Activated naive CD4-positive, alpha-beta T cell treated with anti-CD3 and anti-CD28 coated beads for 36 hours (primary cell): ENCODE measurements at regions of chr20 and their contacts with region 1.

Region 1: GRCh38 chr20:25696384-25697131 is at the start of gene ZNF337:
- DNase-seq: peak; percentile 96
- H3K4me3 Mint-ChIP-seq: peak within 1 kb of the TSS; percentile 93
- H3K27ac Mint-ChIP-seq: peak within 1 kb of the TSS; percentile 81
- H3K4me1 Mint-ChIP-seq: peaks cover 26% of the 10 kb centered on the region
- H3K27me3 Mint-ChIP-seq: no peaks in the 10 kb centered on the region
- total RNA-seq, gene ZNF337: 12.2 to 12.6 TPM

Region 2: DNA sequence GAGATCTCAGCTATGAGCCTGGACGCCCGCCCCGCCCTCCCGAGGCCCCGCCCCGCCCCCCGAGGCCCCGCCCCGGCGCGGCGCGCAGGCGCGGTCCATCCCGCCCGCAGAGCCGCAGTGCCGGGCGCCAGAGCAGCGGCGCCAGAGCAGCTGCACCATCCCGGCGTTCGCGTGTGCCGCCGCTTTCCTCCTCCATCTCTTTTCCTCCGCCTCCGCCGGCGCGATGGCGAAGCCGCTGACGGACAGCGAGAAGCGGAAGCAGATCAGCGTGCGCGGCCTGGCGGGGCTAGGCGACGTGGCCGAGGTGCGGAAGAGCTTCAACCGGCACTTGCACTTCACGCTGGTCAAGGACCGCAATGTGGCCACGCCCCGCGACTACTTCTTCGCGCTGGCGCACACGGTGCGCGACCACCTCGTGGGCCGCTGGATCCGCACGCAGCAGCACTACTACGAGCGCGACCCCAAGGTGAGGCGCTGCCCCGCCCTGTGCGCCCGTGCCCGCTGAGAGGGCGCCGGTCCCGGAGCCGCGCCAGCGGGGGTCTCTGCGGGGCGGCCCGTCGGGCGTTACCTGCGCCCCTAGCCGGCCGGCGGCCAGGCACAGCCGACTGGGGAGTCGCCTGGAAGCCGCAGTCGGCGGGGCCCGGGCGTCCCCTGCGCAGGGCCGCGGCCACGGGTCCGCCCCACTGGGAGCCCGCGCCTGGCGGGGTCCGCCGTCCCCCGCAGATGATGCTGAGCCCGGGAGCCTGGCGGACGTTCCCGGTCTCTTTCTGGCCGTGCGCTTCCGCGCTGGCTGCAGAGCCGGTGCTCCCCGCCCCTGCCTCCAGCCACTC is 448.4 kb before region 1 on chr20 and contains the start of gene PYGB:
- CTCF ChIA-PET with region 1: no interaction called
- intact Hi-C with region 1: loop called (anchors 5 kb)
- DNase-seq: peak; percentile 68
- H3K4me3 Mint-ChIP-seq: peak within 1 kb of the TSS; percentile 91
- H3K27ac Mint-ChIP-seq: peak within 1 kb of the TSS; percentile 82
- H3K4me1 Mint-ChIP-seq: peaks cover 57% of the 10 kb centered on the region
- H3K27me3 Mint-ChIP-seq: peaks cover 7% of the 10 kb centered on the region
- total RNA-seq, gene PYGB: 19.6 to 20.0 TPM

Region 3: GRCh38 chr20:25605148-25605547 is 91.4 kb before region 1 on chr20:
- CTCF ChIA-PET with region 1: no interaction called
- intact Hi-C with region 1: no loop called
- DNase-seq: no peak
- H3K4me3 Mint-ChIP-seq: no peak overlapping the region
- H3K27ac Mint-ChIP-seq: no peak overlapping the region
- H3K4me1 Mint-ChIP-seq: peaks cover 4% of the 10 kb centered on the region
- H3K27me3 Mint-ChIP-seq: no peaks in the 10 kb centered on the region

Region 4: GRCh38 chr20:25623736-25624499 is 72.6 kb before region 1 on chr20 and contains the start of gene NANP:
- CTCF ChIA-PET with region 1: interaction called, 3 read pairs
- intact Hi-C with region 1: loop called (anchors 1 kb)
- DNase-seq: peak; percentile 96
- H3K4me3 Mint-ChIP-seq: peak within 1 kb of the TSS; percentile 91
- H3K27ac Mint-ChIP-seq: peak within 1 kb of the TSS; percentile 95
- H3K4me1 Mint-ChIP-seq: peaks cover 18% of the 10 kb centered on the region
- H3K27me3 Mint-ChIP-seq: no peaks in the 10 kb centered on the region
- total RNA-seq, gene NANP: 6.4 to 6.9 TPM

Region 5: DNA sequence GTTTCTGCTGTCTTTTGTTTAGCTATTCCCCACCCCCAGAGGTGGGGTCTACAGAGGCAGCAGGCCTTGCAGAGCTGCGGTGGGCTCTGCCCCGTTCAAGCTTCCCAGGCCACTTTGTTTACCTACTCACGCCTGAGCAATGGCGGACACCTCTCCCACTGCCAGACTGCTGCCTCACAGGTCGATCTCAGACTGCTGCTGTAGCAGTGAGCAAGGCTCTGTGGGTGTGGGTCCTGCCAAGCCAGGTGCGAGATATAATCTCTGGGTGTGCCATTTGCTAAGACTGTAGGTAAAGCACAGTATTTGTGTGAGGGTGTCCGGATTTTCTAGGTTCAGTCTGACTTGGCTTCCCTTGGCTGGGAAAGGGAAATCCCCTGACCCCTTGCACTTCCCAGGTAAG is 23.7 kb after region 1 on chr20:
- CTCF ChIA-PET with region 1: no interaction called
- intact Hi-C with region 1: loop called (anchors 2 kb)
- DNase-seq: no peak
- H3K4me3 Mint-ChIP-seq: no peak overlapping the region
- H3K27ac Mint-ChIP-seq: no peak overlapping the region
- H3K4me1 Mint-ChIP-seq: peaks cover 24% of the 10 kb centered on the region
- H3K27me3 Mint-ChIP-seq: no peaks in the 10 kb centered on the region

Region 6: DNA sequence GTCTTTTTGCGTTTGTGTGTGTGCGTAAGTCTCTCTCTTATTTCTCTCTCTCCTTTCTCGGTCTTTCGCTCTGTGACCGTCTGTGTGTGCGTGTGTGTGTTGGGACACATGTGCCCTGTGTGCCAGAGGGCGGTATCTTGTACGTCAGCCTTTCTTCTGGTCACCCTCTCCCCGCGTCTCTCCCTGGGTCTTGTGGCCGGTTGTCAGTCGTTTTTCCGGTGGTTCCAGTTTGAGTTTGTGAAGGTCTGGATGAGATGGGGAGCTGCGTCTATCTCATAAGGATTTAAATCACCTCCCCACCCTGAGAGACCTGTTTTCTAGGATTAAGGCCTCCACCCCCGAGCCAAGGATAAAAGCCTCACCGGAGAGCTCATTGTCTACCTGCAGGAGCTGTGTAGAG is 295.6 kb after region 1 on chr20:
- CTCF ChIA-PET with region 1: no interaction called
- intact Hi-C with region 1: no loop called
- DNase-seq: no peak
- H3K4me3 Mint-ChIP-seq: no peak overlapping the region
- H3K27ac Mint-ChIP-seq: no peak overlapping the region
- H3K4me1 Mint-ChIP-seq: peaks cover 3% of the 10 kb centered on the region
- H3K27me3 Mint-ChIP-seq: no peaks in the 10 kb centered on the region

Region 7: GRCh38 chr20:26276554-26277210 is 580.1 kb after region 1 on chr20:
- CTCF ChIA-PET with region 1: no interaction called
- intact Hi-C with region 1: loop called (anchors 5 kb)
- DNase-seq: no peak
- H3K4me3 Mint-ChIP-seq: no peak overlapping the region
- H3K27ac Mint-ChIP-seq: no peak overlapping the region
- H3K4me1 Mint-ChIP-seq: peaks cover 42% of the 10 kb centered on the region
- H3K27me3 Mint-ChIP-seq: no peaks in the 10 kb centered on the region